B cell (primary cell): ENCODE measurements at regions of chr16 and their contacts with region 1.

Region 1: GRCh38 chr16:53130159-53131049 is 75.6 kb downstream of the CHD9 start:
- DNase-seq: peak; percentile 97
- ATAC-seq: peak; percentile 83
- H3K4me3 ChIP-seq: peak overlapping the region; percentile 58 to 73 (median 70)
- H3K4me3 Mint-ChIP-seq: peak overlapping the region; percentile 89
- H3K27ac ChIP-seq: peak overlapping the region; percentile 72 to 97
- H3K27ac Mint-ChIP-seq: peak overlapping the region; percentile 90
- H3K4me1 ChIP-seq: peaks cover 7 to 24% of the 10 kb centered on the region in 2 donors
- H3K4me1 Mint-ChIP-seq: peaks cover 39% of the 10 kb centered on the region
- H3K27me3 ChIP-seq: no peaks in the 10 kb centered on the region
- H3K27me3 Mint-ChIP-seq: no peaks in the 10 kb centered on the region
- CTCF ChIP-seq: peak; percentile 65

Region 2: DNA sequence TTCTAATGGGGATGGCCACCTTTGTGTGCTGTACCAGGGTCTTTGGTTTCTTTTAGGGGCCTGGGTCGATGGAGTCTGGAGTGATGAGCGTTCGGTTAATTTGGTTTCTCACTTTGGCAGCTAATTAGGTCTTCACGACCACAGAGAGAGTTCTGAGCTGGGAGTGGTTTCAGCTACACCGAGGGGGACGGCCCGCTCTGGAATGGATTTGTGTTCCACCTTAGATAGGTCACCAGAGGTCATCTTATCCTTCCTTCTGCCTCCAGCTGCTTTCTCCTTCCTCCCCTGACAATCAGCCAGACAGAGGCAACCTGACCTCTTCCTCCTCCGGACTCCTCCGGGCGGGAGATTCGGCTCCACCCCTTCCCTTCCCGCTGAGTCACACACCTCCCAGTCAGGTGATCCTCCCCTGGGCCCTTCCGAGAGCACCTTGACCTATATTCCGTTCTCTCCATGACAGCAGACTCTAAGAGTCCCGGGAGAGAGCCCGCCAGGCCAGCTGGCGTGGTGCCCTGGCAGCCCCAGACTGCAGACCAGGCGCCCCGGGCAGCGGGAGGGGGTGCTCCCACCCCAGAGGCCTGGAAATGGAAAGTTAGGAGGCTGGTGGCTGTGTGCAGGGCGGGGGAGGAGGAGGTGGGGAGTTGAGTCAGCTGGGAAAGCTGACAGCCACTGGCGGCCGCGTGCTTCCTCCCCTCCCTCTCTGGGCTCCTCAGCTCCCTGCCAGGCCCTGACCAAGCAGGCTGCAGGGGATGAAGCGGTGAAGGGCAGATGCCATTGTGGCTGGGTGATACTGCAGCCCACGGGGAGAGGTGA is 30.9 kb before region 1 on chr16:
- CTCF ChIA-PET with region 1: interaction called, 13 read pairs
- POLR2A ChIA-PET with region 1: interaction called, 6 read pairs
- intact Hi-C with region 1: loop called (anchors 1 kb)
- DNase-seq: no peak
- ATAC-seq: peak; percentile 35
- H3K4me3 ChIP-seq: peak overlapping the region; percentile 39 to 71 (median 65)
- H3K4me3 Mint-ChIP-seq: peak overlapping the region; percentile 82
- H3K27ac ChIP-seq: peak overlapping the region; percentile 95 to 97
- H3K27ac Mint-ChIP-seq: peak overlapping the region; percentile 91
- H3K4me1 ChIP-seq: peaks cover 40 to 60% of the 10 kb centered on the region in 2 donors
- H3K4me1 Mint-ChIP-seq: peaks cover 68% of the 10 kb centered on the region
- H3K27me3 ChIP-seq: no peaks in the 10 kb centered on the region
- H3K27me3 Mint-ChIP-seq: no peaks in the 10 kb centered on the region
- CTCF ChIP-seq: no peak

Region 3: GRCh38 chr16:53207810-53208752 is 77.7 kb after region 1 on chr16:
- CTCF ChIA-PET with region 1: no interaction called
- POLR2A ChIA-PET with region 1: no interaction called
- intact Hi-C with region 1: loop called (anchors 1 kb)
- DNase-seq: peak; percentile 70
- ATAC-seq: peak; percentile 74
- H3K4me3 ChIP-seq: peak overlapping the region; percentile 29 to 85 (median 54)
- H3K4me3 Mint-ChIP-seq: peak overlapping the region; percentile 86
- H3K27ac ChIP-seq: peak overlapping the region; percentile 66 to 78
- H3K27ac Mint-ChIP-seq: peak overlapping the region; percentile 94
- H3K4me1 ChIP-seq: peaks cover 21 to 33% of the 10 kb centered on the region in 2 donors
- H3K4me1 Mint-ChIP-seq: peaks cover 36% of the 10 kb centered on the region
- H3K27me3 ChIP-seq: no peaks in the 10 kb centered on the region
- H3K27me3 Mint-ChIP-seq: no peaks in the 10 kb centered on the region
- CTCF ChIP-seq: peak; percentile 82

Region 4: GRCh38 chr16:53503270-53503923 is 373.0 kb after region 1 on chr16:
- CTCF ChIA-PET with region 1: no interaction called
- POLR2A ChIA-PET with region 1: no interaction called
- intact Hi-C with region 1: loop called (anchors 1 kb)
- DNase-seq: peak; percentile 100
- ATAC-seq: peak; percentile 91
- H3K4me3 ChIP-seq: peak overlapping the region; percentile 52 to 90 (median 86)
- H3K4me3 Mint-ChIP-seq: peak overlapping the region; percentile 87
- H3K27ac ChIP-seq: peak overlapping the region; percentile 82 to 83
- H3K27ac Mint-ChIP-seq: peak overlapping the region; percentile 83
- H3K4me1 ChIP-seq: peaks cover 18 to 21% of the 10 kb centered on the region in 2 donors
- H3K4me1 Mint-ChIP-seq: peaks cover 31% of the 10 kb centered on the region
- H3K27me3 ChIP-seq: no peaks in the 10 kb centered on the region
- H3K27me3 Mint-ChIP-seq: no peaks in the 10 kb centered on the region
- CTCF ChIP-seq: no peak